ENCODE measurements at regions of chr5 and their contacts with region 1.

Region 1: GRCh38 chr5:142888469-142889085 is 118.4 kb downstream of the ARHGAP26 start:
- DNase-seq: peak; percentile 70
- H3K4me3 ChIP-seq: no peak overlapping the region; a peak in 1 of 4 replicates
- H3K27ac ChIP-seq: no peak overlapping the region
- H3K4me1 ChIP-seq: no peaks in the 10 kb centered on the region; a peak in 2 of 4 replicates
- H3K27me3 ChIP-seq: no peaks in the 10 kb centered on the region
- CTCF ChIP-seq: peak; percentile 78
- EP300 ChIP-seq: no peak
- RAD21 ChIP-seq: peak; percentile 88

Region 2: GRCh38 chr5:142699184-142699720 is 189.3 kb before region 1 on chr5:
- CTCF ChIA-PET with region 1: interaction called, 44 read pairs
- POLR2A ChIA-PET with region 1: no interaction called
- DNase-seq: peak; percentile 74
- H3K4me3 ChIP-seq: no peak overlapping the region; a peak in 1 of 4 replicates
- H3K27ac ChIP-seq: no peak overlapping the region
- H3K4me1 ChIP-seq: peaks cover 23 to 28% of the 10 kb centered on the region in 2 experiments
- H3K27me3 ChIP-seq: no peaks in the 10 kb centered on the region
- CTCF ChIP-seq: peak; percentile 95
- EP300 ChIP-seq: no peak
- RAD21 ChIP-seq: peak; percentile 100

Region 3: GRCh38 chr5:142740474-142741242 is 147.9 kb before region 1 on chr5:
- CTCF ChIA-PET with region 1: interaction called, 185 read pairs
- POLR2A ChIA-PET with region 1: no interaction called
- DNase-seq: no peak
- H3K4me3 ChIP-seq: no peak overlapping the region
- H3K27ac ChIP-seq: peak overlapping the region; percentile 47 to 88; a peak in 3 of 4 replicates
- H3K4me1 ChIP-seq: peaks cover 14 to 23% of the 10 kb centered on the region in 2 experiments
- H3K27me3 ChIP-seq: no peaks in the 10 kb centered on the region
- CTCF ChIP-seq: no peak
- EP300 ChIP-seq: peak; percentile 80 to 86
- RAD21 ChIP-seq: no peak

Region 4: DNA sequence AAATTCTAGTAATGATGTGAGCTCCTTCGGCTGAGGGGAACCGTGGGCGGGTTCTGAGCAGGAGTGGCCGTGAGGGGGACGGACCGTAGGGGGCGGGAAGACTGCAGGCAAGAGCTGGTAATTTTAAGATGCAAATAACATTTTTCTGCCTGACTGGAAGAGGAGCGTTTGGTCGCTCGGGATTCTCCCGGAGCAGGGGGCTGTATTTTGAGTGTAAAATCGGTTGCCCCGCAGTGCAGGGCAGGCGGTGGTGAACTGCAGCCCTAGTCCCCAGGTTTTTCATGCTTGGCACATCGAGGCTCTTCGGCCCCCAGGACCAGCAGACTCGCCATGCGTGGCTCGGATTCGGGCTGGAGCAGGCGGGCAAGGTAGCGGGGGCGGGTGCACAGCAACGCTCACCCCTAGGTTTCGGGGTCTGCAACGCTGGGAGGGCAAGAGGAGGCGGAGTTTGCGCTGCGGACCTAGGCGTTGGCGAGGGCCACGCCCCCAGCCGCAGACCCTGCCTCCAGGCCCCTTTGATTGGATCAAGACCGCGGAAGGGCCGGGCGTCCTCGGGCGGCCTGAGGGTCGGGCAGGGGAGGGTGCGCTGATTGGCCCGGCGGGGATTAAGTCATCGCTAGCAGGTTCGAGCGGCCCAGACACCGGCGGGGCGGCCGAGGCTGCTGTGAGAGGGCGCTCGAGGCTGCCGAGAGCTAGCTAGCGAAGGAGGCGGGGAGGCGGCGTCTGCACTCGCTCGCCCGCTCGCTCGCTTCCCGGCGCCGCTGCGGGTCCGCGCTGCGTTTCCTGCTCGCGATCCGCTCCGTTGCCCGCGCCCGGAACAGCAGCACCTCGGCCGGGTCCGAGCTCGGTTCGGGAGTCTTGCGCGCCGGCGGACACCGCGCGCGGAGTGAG is 118.6 kb before region 1 on chr5 and contains the start of gene ARHGAP26:
- CTCF ChIA-PET with region 1: interaction called, 59 read pairs
- POLR2A ChIA-PET with region 1: no interaction called
- DNase-seq: peak; percentile 97
- H3K4me3 ChIP-seq: peak within 1 kb of the TSS; percentile 70 to 87
- H3K27ac ChIP-seq: peak within 1 kb of the TSS; percentile 52 to 89; a peak in 3 of 4 replicates
- H3K4me1 ChIP-seq: peaks cover 12 to 17% of the 10 kb centered on the region in 2 experiments; a peak in 3 of 4 replicates
- H3K27me3 ChIP-seq: no peaks in the 10 kb centered on the region
- CTCF ChIP-seq: peak; percentile 36
- EP300 ChIP-seq: no peak
- RAD21 ChIP-seq: peak; percentile 59
- polyA plus RNA-seq, gene ARHGAP26: 6.1 and 8.4 TPM in 2 replicates

Region 5: GRCh38 chr5:142900927-142901326 is 12.3 kb after region 1 on chr5:
- CTCF ChIA-PET with region 1: interaction called, 51 read pairs
- POLR2A ChIA-PET with region 1: no interaction called
- DNase-seq: no peak
- H3K4me3 ChIP-seq: no peak overlapping the region
- H3K27ac ChIP-seq: no peak overlapping the region
- H3K4me1 ChIP-seq: peaks cover 3 to 8% of the 10 kb centered on the region in 2 experiments; a peak in 2 of 4 replicates
- H3K27me3 ChIP-seq: no peaks in the 10 kb centered on the region
- CTCF ChIP-seq: no peak
- EP300 ChIP-seq: no peak
- RAD21 ChIP-seq: no peak

Region 6: DNA sequence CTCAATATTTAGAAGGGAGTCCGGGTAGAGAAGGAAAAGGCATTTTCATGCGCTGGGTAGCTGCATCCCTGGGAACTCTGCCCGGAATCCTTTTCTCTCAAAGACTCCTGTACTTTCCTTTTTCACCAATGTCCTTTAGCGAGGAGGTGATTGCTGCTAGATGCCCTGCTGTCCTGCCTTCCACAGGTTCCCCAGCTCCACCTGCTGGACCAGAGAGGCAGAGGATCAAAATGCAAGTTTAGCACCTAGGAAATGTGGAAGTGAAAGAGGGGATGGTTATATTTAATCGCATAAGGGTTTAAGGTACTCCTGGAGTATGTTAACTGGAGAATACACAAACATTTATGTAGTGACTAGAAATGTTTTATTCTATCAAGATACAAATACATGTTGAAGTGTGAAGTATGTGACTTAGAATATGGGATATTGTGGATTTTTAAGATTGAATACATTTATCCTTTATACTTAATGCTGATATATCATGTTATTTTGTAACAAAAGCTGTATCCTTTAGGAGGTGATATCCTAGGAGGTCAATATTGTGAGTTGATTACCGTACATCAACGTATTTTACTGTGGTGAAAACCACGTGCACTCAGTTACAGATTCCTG is 27.3 kb after region 1 on chr5:
- CTCF ChIA-PET with region 1: interaction called, 31 read pairs
- POLR2A ChIA-PET with region 1: no interaction called
- DNase-seq: peak; percentile 37
- H3K4me3 ChIP-seq: peak overlapping the region in 1 of 2 experiments; percentile 31; a peak in 1 of 4 replicates
- H3K27ac ChIP-seq: no peak overlapping the region
- H3K4me1 ChIP-seq: no peaks in the 10 kb centered on the region
- H3K27me3 ChIP-seq: no peaks in the 10 kb centered on the region
- CTCF ChIP-seq: peak; percentile 58
- EP300 ChIP-seq: no peak
- RAD21 ChIP-seq: peak; percentile 61